ENCODE measurements at regions of chr18 and their contacts with region 1.

Region 1: GRCh38 chr18:63299837-63300745 is 19.5 kb downstream of the BCL2 start:
- DNase-seq: peak; percentile 64
- H3K4me3 Mint-ChIP-seq: peak overlapping the region; percentile 53
- H3K27ac Mint-ChIP-seq: peak overlapping the region; percentile 83
- H3K4me1 Mint-ChIP-seq: peaks cover 85% of the 10 kb centered on the region
- H3K27me3 Mint-ChIP-seq: no peaks in the 10 kb centered on the region

Region 2: DNA sequence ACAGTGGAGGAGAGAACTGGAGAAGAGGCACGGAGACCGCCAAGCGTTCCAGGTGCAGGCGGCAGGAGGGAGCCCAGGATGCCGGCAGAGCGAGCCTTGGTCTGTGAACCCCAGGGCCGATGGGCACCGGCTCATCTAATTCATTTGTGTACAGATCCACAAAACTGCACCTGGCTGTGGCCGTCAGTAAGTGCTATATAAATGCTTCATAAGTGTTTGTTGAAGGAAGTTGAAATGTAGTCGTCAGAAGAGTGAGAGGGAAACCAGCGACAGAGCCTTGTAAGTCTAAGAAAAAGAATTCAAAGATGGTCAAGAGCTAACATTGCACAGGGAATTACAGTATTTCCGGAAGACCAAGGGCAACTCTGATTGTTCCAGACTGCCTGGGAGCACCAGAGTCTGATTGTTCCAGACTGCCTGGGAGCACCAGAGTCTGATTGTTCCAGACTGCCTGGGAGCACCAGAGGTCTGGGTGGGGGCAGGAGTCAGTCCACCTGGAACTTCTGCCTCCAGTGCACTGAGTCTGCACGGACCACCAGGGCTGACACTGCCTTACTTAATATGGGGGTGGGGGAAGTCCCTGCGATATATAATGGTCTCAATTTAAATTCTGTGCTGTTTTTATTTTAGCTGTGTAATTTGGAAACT is 92.8 kb before region 1 on chr18:
- CTCF ChIA-PET with region 1: interaction called, 3 read pairs
- POLR2A ChIA-PET with region 1: interaction called, 11 read pairs
- DNase-seq: no peak
- H3K4me3 Mint-ChIP-seq: peak overlapping the region; percentile 81
- H3K27ac Mint-ChIP-seq: peak overlapping the region; percentile 94
- H3K4me1 Mint-ChIP-seq: peaks cover 93% of the 10 kb centered on the region
- H3K27me3 Mint-ChIP-seq: no peaks in the 10 kb centered on the region

Region 3: GRCh38 chr18:63267975-63268721 is 31.9 kb before region 1 on chr18:
- CTCF ChIA-PET with region 1: interaction called, 5 read pairs
- POLR2A ChIA-PET with region 1: interaction called, 28 read pairs
- DNase-seq: no peak
- H3K4me3 Mint-ChIP-seq: peak overlapping the region; percentile 33
- H3K27ac Mint-ChIP-seq: peak overlapping the region; percentile 75
- H3K4me1 Mint-ChIP-seq: peaks cover 67% of the 10 kb centered on the region
- H3K27me3 Mint-ChIP-seq: no peaks in the 10 kb centered on the region